ENCODE measurements at regions of chr6 and their contacts with region 1.

Region 1: GRCh38 chr6:119349323-119350042 is at the start of gene MAN1A1:
- ATAC-seq: peak; percentile 84 to 95 (median 93)
- H3K4me3 ChIP-seq: peak within 1 kb of the TSS; percentile 58 to 97 (median 88)
- H3K27ac ChIP-seq: peak within 1 kb of the TSS in 1 of 2 donors; percentile 49
- H3K4me1 ChIP-seq: peaks cover 4 to 16% of the 10 kb centered on the region in 2 donors
- total RNA-seq, gene MAN1A1: 0.73 to 32.9 (median 4.5) TPM

Region 2: DNA sequence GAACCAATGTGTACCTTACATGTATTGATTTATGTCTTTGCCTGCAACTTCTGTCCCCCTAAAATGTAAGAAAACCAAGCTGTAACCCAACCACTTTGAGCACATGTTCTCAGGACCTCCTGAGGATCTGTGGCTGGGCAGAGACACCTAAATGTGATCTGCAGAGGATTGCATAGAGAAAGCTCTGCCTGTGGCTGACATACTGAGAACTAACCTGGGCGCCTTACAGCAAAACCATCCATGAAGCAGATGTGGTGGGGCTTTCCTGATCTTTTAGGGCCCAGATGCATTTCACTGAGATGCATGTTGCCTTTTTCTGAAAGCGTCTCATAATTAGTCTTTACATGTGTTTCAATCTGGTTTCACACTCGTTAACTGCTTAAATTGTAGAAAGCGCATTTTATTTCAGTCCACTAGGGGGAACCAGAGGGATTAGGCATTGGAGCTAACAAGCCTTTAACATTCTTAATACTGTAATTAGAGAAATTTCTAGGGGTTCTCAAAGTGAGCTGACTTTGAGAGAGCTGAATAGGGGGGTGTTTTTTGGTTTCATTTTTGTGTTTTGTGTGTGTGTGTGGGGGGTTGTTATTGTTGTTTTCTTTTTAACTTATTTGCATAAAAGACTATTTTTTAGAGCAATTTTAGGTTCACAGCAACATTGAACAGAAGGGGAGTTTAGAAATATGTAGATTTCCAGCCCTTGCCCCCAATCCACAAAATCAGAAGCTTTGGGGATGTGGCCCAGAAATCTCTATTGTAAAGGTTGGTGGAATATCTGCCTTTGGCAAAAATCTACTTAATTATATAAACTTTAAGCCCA is 220.1 kb before region 1 on chr6:
- in situ Hi-C with region 1: loop called in 1 of 9 experiments (anchors 25 kb)
- ATAC-seq: peak; percentile 38 to 79 (median 53)
- H3K4me3 ChIP-seq: no peak overlapping the region
- H3K27ac ChIP-seq: no peak overlapping the region
- H3K4me1 ChIP-seq: peaks cover 0 to 6% of the 10 kb centered on the region in 2 donors

Region 3: GRCh38 chr6:119158057-119158848 is 191.2 kb before region 1 on chr6:
- in situ Hi-C with region 1: loop called in 1 of 9 experiments (anchors 10 kb)
- ATAC-seq: peak in 2 of 8 experiments; percentile 47 to 50
- H3K4me3 ChIP-seq: no peak overlapping the region
- H3K27ac ChIP-seq: no peak overlapping the region
- H3K4me1 ChIP-seq: peaks cover 0 to 5% of the 10 kb centered on the region in 2 donors

Region 4: DNA sequence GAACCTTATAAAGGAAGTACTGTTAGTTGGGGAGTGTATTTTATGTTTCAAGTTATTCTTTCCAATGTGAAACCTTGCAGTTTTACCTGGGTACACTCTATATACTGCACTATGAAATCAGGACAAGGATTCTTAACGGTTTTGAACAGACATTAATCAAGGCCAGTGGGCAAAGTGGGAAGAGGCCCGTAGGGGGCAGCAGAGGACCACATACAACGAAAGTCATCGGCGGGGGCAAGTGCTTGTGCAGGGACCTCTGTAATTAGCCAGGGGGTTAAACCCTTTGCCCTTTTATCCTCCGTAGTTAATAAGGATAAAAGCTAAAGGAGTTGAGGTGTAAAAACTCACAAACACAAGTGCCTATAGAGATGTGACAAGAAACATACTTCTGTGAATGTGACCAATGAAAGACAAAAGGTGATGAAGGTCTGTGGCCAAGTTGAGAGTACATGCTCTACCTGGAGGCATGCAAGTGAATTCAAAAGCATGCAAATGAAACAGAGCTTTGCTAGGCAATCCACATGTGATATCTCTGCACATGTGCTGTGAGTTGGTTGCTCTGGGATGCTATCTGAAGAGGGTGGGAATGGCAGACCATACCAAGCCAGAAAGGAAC is 392.8 kb after region 1 on chr6:
- in situ Hi-C with region 1: loop called in 1 of 9 experiments (anchors 25 kb)
- ATAC-seq: peak in 5 of 8 experiments; percentile 41 to 91 (median 72)
- H3K4me3 ChIP-seq: no peak overlapping the region
- H3K27ac ChIP-seq: no peak overlapping the region
- H3K4me1 ChIP-seq: peaks cover 0 to 10% of the 10 kb centered on the region in 2 donors